Mucosa of descending colon (tissue), 3 donors: ENCODE measurements at regions of chr22 and their contacts with region 1.

Region 1: GRCh38 chr22:23178512-23179254 is 1.6 kb upstream of the BCR start:
- DNase-seq: peak; percentile 68 to 79 (median 71)
- ATAC-seq: peak; percentile 64
- H3K4me3 ChIP-seq: no peak overlapping the region
- H3K4me1 ChIP-seq: peaks cover 34% of the 10 kb centered on the region
- CTCF ChIP-seq: peak; percentile 92

Region 2: DNA sequence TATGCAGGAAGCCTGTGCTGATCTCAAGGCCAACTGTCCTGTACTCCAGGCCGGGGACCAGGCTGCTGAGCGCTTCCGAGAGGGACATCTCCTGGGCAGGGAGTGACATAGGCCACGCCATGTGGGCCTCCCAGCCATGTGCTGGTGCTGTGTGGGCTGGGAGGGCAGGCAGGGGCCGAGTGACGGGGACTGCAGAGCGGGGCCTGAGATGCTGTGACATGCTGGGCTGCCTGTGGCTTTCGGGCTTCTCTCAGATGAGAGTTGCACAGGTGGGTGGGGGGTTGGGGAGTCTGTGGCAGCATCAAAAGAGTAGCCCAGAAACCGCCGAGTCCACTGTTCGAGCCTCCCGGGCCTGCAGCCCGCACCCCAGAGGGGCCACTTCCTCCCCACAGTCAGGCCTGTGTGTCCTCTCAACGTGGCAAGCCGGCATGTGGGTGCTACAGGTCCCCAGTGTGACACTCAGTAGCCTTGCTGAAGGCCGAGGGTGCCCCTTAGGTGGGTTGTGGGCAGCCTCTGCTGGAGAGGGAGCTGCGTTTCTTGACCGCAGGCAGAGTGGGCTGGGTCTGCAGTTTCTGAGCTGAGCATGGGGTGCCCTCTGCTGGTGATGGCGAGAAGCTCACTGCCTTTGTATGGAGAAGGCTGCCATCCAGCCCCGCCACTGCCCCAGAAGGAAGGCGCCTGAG is 102.9 kb after region 1 on chr22:
- intact Hi-C with region 1: loop called (anchors 2 to 5 kb)
- DNase-seq: peak; percentile 82 to 92 (median 89)
- ATAC-seq: peak; percentile 72
- H3K4me3 ChIP-seq: no peak overlapping the region
- H3K4me1 ChIP-seq: peaks cover 23% of the 10 kb centered on the region
- CTCF ChIP-seq: peak; percentile 90